GM12878 (cell line): ENCODE measurements at regions of chr10 and their contacts with region 1.

Region 1: DNA sequence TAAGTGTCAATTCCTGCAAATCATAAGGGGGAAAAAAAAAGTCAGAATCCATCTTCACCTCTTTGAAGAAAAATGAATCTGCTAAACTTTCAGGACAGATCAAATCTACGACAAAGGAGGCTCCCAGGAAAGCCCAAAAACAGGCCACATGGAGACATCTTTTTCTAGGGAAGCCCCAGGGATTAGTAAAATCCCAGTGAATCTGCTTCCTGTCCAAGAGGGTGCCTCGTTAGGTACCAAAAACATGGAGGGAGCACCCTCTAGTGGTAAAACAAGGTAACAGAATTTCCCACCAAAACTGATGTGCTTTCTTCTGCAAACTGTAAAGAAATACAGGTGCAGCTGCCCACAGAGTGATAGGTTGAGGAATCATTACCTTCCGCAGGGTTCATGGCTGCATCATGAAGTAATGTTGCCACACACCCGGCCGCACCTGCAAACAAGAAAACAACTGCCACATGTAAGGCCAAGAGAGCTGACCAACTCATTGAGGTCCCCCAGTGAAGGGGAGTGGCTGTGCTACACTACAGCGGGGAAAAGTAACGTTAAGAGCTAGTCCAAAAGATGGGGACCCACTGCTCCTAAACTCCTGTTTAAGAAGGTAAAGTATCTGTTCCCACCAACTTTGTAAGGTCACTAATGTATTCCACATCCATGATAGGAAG is 7.9 kb downstream of the SLC25A28 start:
- DNase-seq: no peak
- ATAC-seq: peak; percentile 83
- H3K4me3 ChIP-seq: no peak overlapping the region
- H3K27ac ChIP-seq: no peak overlapping the region
- H3K4me1 ChIP-seq: no peaks in the 10 kb centered on the region
- H3K27me3 ChIP-seq: no peaks in the 10 kb centered on the region
- CTCF ChIP-seq: peak; percentile 82 to 86 (median 86); a peak in 5 of 6 replicates
- EP300 ChIP-seq: no peak
- POLR2A ChIP-seq: no peak; the same call in 1 of the 2 replicates
- RAD21 ChIP-seq: peak; percentile 87

Region 2: DNA sequence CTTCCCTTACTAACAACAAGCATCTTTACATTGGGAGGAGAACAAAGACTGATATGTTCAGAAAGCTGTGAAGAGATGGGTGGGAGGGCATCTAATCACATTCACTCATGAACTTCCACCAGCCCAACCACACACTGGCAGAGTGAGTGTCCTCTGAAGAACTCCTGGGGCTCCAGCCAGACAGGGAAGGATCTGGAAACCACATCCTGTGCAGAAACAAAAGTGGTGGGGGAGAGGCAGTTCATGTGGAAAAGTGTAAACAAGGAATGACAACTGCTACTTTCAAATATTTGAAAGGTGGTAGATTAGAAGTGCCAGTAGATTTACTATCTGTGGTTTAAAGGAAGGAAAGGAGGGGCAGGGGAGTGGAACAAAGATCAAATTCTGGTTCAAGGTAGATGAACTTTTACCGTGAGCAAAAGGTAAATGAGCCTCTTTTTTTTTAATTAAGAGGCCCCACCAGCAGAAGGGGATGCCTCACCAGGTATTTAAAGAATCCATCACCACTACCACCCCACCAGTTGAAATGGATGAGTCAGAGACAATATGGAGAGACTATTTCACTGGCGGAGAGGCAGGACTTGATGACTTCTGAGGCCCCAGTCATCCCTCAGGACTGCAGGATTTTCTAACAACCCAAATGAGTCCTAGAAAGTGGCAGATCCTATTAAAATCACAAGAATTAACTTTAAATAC is 216.4 kb before region 1 on chr10:
- CTCF ChIA-PET with region 1: interaction called, 32 read pairs
- POLR2A ChIA-PET with region 1: interaction called, 3 read pairs
- RAD21 ChIA-PET with region 1: interaction called, 9 read pairs
- SMC1A ChIA-PET with region 1: interaction called, 14 read pairs
- in situ Hi-C with region 1: loop called (anchors 5 kb)
- intact Hi-C with region 1: loop called (anchors 1 kb)
- DNase-seq: no peak
- ATAC-seq: no peak
- H3K4me3 ChIP-seq: no peak overlapping the region
- H3K27ac ChIP-seq: no peak overlapping the region
- H3K4me1 ChIP-seq: no peaks in the 10 kb centered on the region
- H3K27me3 ChIP-seq: no peaks in the 10 kb centered on the region
- CTCF ChIP-seq: no peak
- EP300 ChIP-seq: no peak
- POLR2A ChIP-seq: no peak
- RAD21 ChIP-seq: no peak

Region 3: GRCh38 chr10:99430451-99431189 is 181.7 kb before region 1 on chr10 and contains the start of gene GOT1:
- CTCF ChIA-PET with region 1: interaction called, 233 read pairs
- POLR2A ChIA-PET with region 1: interaction called, 3 read pairs
- RAD21 ChIA-PET with region 1: interaction called, 70 read pairs
- SMC1A ChIA-PET with region 1: interaction called, 38 read pairs
- in situ Hi-C with region 1: loop called (anchors 5 kb)
- intact Hi-C with region 1: no loop called
- DNase-seq: peak; percentile 99
- ATAC-seq: peak; percentile 97
- H3K4me3 ChIP-seq: peak within 1 kb of the TSS; percentile 97
- H3K27ac ChIP-seq: peak within 1 kb of the TSS; percentile 71
- H3K4me1 ChIP-seq: peaks cover 4% of the 10 kb centered on the region; the same call in 1 of the 2 replicates
- H3K27me3 ChIP-seq: no peaks in the 10 kb centered on the region
- CTCF ChIP-seq: no peak
- EP300 ChIP-seq: no peak
- POLR2A ChIP-seq: peak; percentile 94
- RAD21 ChIP-seq: no peak
- polyA plus RNA-seq, gene GOT1: 56.2 to 58.4 TPM

Region 4: DNA sequence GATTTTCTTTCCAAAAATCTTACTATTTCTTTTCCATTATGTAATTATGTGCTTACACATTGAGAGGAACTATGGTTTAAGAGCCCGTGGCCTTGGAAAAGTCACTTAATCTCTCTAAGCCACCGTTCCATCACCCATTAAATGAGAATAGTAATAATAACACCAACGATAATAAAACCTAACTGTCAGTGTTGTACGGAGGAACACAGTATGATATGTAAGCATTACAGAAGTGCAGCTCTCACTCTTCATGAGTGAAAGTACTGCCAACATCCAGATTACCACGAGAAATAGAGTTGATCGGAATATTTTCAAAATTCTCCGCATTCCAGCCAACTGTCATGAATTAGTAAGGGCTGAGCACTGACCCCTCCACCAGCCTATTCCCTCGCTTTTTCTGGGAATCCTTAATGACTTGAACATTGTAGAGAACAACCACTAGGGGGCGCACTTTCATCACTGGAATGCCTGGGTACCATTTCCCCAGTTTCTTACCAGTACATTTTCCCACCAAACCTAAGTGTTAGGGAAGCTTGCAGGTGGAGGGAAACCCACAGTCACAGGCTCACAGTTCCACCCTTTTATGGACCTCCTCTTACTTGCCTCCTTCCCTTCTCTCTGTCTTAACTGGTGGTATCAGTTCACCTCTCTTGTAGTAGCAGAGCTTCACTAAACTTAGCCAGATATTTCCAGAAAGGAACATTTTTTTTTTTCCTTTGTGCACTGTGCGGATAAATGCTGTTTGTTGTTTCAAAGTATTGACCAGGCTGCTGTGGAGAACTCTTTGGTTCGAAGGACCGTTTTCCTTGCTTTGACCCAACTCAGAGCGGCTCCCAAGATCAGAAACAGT is 51.8 kb before region 1 on chr10:
- CTCF ChIA-PET with region 1: interaction called, 201 read pairs
- POLR2A ChIA-PET with region 1: no interaction called
- RAD21 ChIA-PET with region 1: interaction called, 8 read pairs
- SMC1A ChIA-PET with region 1: interaction called, 16 read pairs
- in situ Hi-C with region 1: no loop called
- intact Hi-C with region 1: loop called (anchors 1 kb)
- DNase-seq: no peak
- ATAC-seq: no peak
- H3K4me3 ChIP-seq: no peak overlapping the region
- H3K27ac ChIP-seq: no peak overlapping the region
- H3K4me1 ChIP-seq: peaks cover 13% of the 10 kb centered on the region
- H3K27me3 ChIP-seq: no peaks in the 10 kb centered on the region; a peak in 1 of 4 replicates
- CTCF ChIP-seq: peak; percentile 65 to 74 (median 67)
- EP300 ChIP-seq: no peak
- POLR2A ChIP-seq: no peak
- RAD21 ChIP-seq: peak; percentile 69

Region 5: DNA sequence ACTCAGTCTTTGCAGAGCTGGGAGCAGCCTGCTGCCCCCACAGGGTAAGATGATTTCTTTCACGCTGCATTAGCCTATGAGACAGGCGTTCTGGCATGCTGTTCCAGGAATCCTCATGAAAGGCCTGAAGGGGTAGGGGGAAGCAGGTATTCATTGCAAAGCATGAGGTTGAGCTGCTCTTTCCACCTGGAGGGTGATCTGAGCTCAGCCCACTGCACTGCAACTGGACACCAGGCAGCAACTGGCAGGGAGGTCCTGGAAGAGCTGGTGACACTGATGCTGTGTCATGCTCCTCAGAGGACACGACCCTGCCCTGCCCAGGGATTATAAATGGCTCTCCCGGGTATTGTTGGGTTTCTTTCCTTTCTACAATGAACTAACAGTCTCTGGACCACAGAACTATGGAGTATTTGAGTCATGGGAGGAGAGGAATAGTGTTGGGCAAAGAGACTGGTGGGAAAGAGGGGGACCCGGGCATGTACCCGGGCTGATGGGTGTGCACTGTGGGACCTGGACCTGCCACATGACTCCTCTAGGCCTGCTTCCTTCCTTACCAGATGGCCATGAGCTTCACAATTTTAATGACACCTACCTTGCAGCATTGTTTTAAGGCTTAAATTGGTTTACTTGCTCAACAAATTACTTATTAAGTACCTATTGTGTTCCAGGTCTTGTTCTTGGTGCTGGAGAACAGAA is 16.4 kb before region 1 on chr10:
- CTCF ChIA-PET with region 1: interaction called, 24 read pairs
- POLR2A ChIA-PET with region 1: interaction called, 4 read pairs
- RAD21 ChIA-PET with region 1: no interaction called
- SMC1A ChIA-PET with region 1: interaction called, 4 read pairs
- in situ Hi-C with region 1: no loop called
- intact Hi-C with region 1: no loop called
- DNase-seq: no peak
- ATAC-seq: no peak
- H3K4me3 ChIP-seq: no peak overlapping the region
- H3K27ac ChIP-seq: no peak overlapping the region
- H3K4me1 ChIP-seq: peaks cover 6% of the 10 kb centered on the region
- H3K27me3 ChIP-seq: no peaks in the 10 kb centered on the region
- CTCF ChIP-seq: no peak
- EP300 ChIP-seq: no peak
- POLR2A ChIP-seq: no peak
- RAD21 ChIP-seq: no peak

Region 6: DNA sequence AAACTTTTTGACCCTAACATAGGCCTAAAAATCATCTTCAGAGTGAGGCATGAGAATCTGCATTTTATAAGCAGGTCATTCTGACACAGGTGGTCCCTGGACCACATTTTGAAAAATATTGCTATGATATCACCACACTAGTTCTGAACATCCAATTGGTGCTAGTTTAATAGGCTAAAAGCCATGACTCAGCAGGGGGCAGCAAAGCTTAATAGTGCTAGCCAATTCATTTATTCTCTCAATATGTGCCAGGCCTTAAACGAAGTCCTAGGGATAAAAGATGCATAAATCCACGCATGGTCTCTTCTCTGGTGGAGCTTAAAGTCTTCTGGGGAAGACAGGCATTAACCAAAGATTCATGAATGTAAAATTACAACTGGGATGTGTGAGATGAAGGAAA is 18.1 kb after region 1 on chr10:
- CTCF ChIA-PET with region 1: interaction called, 11 read pairs
- POLR2A ChIA-PET with region 1: interaction called, 5 read pairs
- RAD21 ChIA-PET with region 1: interaction called, 3 read pairs
- SMC1A ChIA-PET with region 1: interaction called, 3 read pairs
- in situ Hi-C with region 1: no loop called
- intact Hi-C with region 1: no loop called
- DNase-seq: no peak
- ATAC-seq: peak; percentile 81
- H3K4me3 ChIP-seq: no peak overlapping the region
- H3K27ac ChIP-seq: no peak overlapping the region
- H3K4me1 ChIP-seq: peaks cover 7% of the 10 kb centered on the region
- H3K27me3 ChIP-seq: no peaks in the 10 kb centered on the region
- CTCF ChIP-seq: peak; percentile 33 to 53 (median 44); a peak in 4 of 6 replicates
- EP300 ChIP-seq: no peak
- POLR2A ChIP-seq: no peak
- RAD21 ChIP-seq: peak; percentile 66